Heart left ventricle (tissue), 16 donors: ENCODE measurements at regions of chr3 and their contacts with region 1.

Region 1: DNA sequence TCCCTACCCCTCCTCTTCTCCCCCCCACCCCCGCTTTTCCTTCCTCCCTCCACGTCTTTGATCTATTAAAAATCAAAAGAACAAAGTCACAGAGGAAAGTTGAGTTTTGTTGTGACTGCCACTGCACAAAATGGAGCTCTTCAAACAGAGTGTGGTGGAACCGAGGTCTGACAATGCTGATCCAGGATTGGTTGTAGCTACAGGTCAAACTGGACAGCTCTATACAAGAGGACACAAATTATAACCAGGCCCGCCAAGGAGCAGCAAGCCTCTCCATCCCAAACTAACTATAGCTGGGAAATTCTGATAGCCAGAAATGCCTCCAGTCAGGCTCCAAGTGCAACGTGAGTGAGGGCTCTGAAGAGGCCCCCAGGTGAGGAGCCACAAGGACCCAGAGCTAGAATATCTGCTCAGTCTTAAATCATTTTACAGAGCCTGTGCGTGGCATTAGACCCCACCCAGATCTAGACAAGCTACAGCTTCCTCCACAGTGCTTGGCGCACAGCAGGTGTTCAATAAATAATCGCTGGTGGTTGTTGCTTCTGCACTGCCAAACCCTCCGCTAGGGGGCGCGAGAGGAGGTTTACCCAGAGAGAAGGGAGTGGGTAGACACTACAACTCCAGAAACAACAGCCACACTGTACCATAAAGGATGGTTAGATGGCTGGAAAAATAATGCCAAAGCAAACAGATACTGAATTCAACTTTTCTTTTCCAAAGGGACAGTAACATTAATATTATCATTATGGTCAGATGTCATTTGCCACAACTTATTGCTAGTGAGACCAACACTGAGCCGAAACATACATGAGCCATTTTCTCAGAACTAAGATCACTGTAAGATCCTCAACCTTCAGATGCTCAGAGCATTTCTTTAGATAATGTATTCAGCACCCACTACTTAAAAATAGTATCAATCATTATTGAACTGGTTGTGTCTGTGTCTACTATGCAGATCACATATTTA is 44.6 kb downstream of the ZIC4 start:
- DNase-seq: peak in 1 of 5 donors; percentile 58
- ATAC-seq: no peak
- H3K4me3 ChIP-seq: no peak overlapping the region
- H3K27ac ChIP-seq: no peak overlapping the region
- H3K4me1 ChIP-seq: peaks cover 0 to 4% (median 0%) of the 10 kb centered on the region in 12 donors
- H3K27me3 ChIP-seq: peaks cover 33 to 97% (median 79%) of the 10 kb centered on the region in 9 donors
- CTCF ChIP-seq: peak in 9 of 12 donors; percentile 21 to 54 (median 28)
- POLR2A ChIP-seq: no peak

Region 2: GRCh38 chr3:147318900-147319299 is 42.8 kb before region 1 on chr3:
- intact Hi-C with region 1: no loop called
- DNase-seq: no peak
- ATAC-seq: no peak
- H3K4me3 ChIP-seq: no peak overlapping the region
- H3K27ac ChIP-seq: no peak overlapping the region
- H3K4me1 ChIP-seq: no peaks in the 10 kb centered on the region
- H3K27me3 ChIP-seq: peaks cover 0 to 3% (median 0%) of the 10 kb centered on the region in 9 donors
- CTCF ChIP-seq: no peak
- POLR2A ChIP-seq: no peak

Region 3: GRCh38 chr3:147418808-147419701 is 57.3 kb after region 1 on chr3:
- intact Hi-C with region 1: loop called in 1 of 10 experiments (anchors 10 kb)
- DNase-seq: no peak
- ATAC-seq: no peak
- H3K4me3 ChIP-seq: peak overlapping the region in 6 of 12 donors; percentile 1 to 29 (median 12)
- H3K27ac ChIP-seq: no peak overlapping the region
- H3K4me1 ChIP-seq: peaks cover 4 to 30% (median 8%) of the 10 kb centered on the region in 12 donors
- H3K27me3 ChIP-seq: peaks cover 66 to 100% (median 97%) of the 10 kb centered on the region in 9 donors
- CTCF ChIP-seq: no peak
- POLR2A ChIP-seq: no peak